HCT116 (cell line): ENCODE measurements at regions of chr10 and their contacts with region 1.

Region 1: DNA sequence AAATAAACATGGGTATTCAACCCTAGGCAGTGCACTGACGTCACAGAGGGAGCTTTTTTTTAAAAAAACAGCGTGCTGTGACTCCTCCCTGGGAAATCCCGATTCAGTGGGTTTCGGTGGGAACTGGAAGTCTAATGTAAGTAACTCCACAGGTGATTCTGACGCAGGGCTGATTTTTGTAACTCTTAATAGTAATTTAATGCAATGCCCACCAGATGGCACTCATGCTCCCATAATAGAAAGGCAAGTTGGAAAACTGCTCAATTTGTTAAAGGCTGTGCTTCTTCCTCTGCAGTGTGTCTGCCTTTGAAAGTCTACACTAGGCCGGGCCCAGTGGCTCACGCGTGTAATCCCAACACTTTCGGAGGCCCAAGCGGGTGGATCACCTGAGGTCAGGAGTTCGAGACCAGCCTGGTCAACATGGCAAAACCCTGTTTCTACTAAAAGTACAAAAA is 10.9 kb upstream of the RSU1 start:
- DNase-seq: peak; percentile 83
- ATAC-seq: peak; percentile 90
- H3K4me3 ChIP-seq: no peak overlapping the region
- H3K27ac ChIP-seq: no peak overlapping the region
- H3K4me1 ChIP-seq: no peaks in the 10 kb centered on the region; a peak in 1 of 4 replicates
- H3K27me3 ChIP-seq: no peaks in the 10 kb centered on the region
- CTCF ChIP-seq: peak; percentile 46 to 57 (median 54); a peak in 5 of 6 replicates
- POLR2A ChIP-seq: no peak
- RAD21 ChIP-seq: peak; percentile 83

Region 2: GRCh38 chr10:15518250-15518649 is 1309.9 kb before region 1 on chr10:
- CTCF ChIA-PET with region 1: no interaction called
- POLR2A ChIA-PET with region 1: no interaction called
- RAD21 ChIA-PET with region 1: no interaction called
- intact Hi-C with region 1: no loop called
- DNase-seq: no peak
- ATAC-seq: no peak
- H3K4me3 ChIP-seq: no peak overlapping the region
- H3K27ac ChIP-seq: no peak overlapping the region
- H3K4me1 ChIP-seq: peaks cover 0 to 4% of the 10 kb centered on the region in 2 experiments; a peak in 1 of 4 replicates
- H3K27me3 ChIP-seq: peaks cover 28% of the 10 kb centered on the region
- CTCF ChIP-seq: no peak
- POLR2A ChIP-seq: no peak
- RAD21 ChIP-seq: no peak

Region 3: DNA sequence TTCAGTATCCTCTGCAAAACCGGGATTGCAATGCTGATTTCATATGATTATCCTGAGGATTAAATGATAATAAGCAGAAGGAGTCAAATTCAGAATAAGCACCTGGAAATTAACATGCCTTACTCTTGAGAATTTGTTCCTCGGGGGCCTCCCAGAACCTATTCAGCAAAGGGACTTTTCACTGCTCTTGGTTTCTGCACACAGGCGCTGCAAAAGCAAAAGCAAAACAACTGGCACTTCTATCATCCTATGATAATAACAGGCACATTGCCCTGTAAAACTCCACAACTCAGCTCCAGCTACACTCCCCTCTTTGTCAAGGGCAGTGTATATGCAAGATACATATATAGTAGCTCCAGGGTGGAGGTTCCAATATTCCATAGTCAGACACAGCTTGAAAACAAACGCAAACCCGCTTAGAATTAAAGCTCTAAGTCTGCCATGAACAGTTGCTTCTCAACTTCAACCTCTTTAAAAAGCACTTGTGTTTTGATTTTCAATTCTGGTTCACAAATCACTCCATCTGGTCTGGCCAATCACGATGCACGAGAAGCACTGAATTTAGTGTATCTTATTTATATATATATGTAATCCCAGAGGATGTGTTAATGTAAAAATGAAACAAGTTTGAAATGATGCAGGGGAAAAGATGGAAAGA is 511.3 kb before region 1 on chr10:
- CTCF ChIA-PET with region 1: no interaction called
- POLR2A ChIA-PET with region 1: no interaction called
- RAD21 ChIA-PET with region 1: no interaction called
- intact Hi-C with region 1: no loop called
- DNase-seq: no peak
- ATAC-seq: no peak
- H3K4me3 ChIP-seq: no peak overlapping the region
- H3K27ac ChIP-seq: no peak overlapping the region
- H3K4me1 ChIP-seq: no peaks in the 10 kb centered on the region
- H3K27me3 ChIP-seq: peaks cover 7% of the 10 kb centered on the region
- CTCF ChIP-seq: no peak
- POLR2A ChIP-seq: no peak
- RAD21 ChIP-seq: no peak

Region 4: GRCh38 chr10:17249820-17250219 is 421.7 kb after region 1 on chr10:
- CTCF ChIA-PET with region 1: no interaction called
- POLR2A ChIA-PET with region 1: no interaction called
- RAD21 ChIA-PET with region 1: no interaction called
- intact Hi-C with region 1: loop called (anchors 1 kb)
- DNase-seq: peak; percentile 29
- ATAC-seq: peak; percentile 72
- H3K4me3 ChIP-seq: no peak overlapping the region
- H3K27ac ChIP-seq: no peak overlapping the region
- H3K4me1 ChIP-seq: no peaks in the 10 kb centered on the region
- H3K27me3 ChIP-seq: no peaks in the 10 kb centered on the region
- CTCF ChIP-seq: peak; percentile 61 to 69 (median 67); a peak in 5 of 6 replicates
- POLR2A ChIP-seq: no peak
- RAD21 ChIP-seq: peak; percentile 83